ENCODE measurements at regions of chr19 and their contacts with region 1.

Region 1: DNA sequence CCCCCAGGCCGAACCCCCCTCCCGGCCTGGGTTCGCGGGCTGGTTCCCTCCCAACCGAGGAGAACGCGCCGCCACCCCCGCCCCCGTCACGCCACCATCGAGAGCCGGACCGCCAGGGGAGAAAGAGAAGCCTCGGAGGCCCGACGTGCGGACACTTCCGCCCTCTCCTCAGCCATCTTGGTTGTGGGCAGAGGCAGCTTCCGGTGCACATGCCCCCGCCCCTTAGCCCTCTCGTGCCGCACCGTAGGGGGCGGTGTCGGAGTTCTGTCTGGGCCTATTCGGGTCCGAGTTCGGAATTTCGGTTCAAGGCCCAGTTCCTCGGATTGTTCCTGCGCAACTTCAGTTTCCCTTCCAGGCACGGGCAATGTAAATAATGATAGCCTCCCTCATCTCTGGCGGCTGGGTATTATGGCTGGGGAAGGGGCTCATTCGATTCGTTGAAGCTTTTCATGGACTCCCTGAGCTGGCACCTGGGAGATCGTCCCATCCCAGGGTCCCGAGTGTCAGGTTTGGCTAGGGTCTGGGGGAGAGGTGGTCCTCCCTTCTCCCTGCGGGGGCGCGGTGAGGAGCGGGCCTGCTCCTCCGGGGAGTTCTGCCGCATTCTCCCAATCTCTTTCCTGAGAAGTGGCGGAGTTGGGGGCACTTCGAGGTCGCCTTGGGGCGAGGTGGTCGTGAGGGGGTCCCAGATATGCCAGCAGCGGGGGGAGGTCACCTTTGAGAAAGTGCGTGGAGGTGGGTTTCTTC is at the starts of genes IER2 and STX10:
- DNase-seq: peak; percentile 88
- ATAC-seq: peak; percentile 45
- H3K4me3 Mint-ChIP-seq: peak within 1 kb of the TSS; percentile 99
- H3K27ac Mint-ChIP-seq: peak within 1 kb of the TSS; percentile 99
- H3K4me1 Mint-ChIP-seq: peaks cover 40% of the 10 kb centered on the region
- H3K27me3 Mint-ChIP-seq: no peaks in the 10 kb centered on the region
- CTCF ChIP-seq: no peak
- total RNA-seq, gene IER2: 116 and 119 TPM in 2 replicates
- total RNA-seq, gene STX10: 41.7 and 43.6 TPM in 2 replicates

Region 2: DNA sequence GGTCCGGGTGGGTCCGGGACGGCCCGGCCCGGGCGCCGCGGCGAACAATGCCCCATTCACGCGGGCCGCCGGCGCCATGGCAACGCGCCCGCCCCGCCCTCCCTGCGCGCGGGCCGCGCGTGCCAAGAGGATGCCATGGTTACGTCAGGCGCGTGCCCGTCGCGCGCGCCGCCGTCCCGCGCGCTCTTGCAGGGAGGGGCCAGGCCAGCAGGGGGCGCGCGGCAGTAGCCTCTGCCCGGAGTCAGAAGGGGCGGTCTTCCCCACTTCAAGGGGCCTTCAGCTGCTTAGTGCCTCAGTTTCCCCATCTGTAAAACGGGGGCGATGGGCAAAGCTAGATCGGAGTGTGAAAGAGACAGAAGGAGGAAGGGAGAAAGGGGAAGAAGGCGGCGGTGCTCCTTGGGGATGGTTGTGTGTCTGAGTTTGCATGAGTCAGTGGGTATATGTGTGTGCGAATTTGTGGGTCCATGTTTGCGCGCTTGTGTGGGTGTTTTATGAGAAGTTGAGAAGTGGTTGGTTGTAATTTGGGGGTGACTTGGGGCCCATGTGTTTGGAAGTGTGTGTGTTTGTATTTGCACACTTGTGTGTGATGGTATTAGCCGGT is 166.7 kb before region 1 on chr19:
- CTCF ChIA-PET with region 1: interaction called, 3 read pairs
- POLR2A ChIA-PET with region 1: interaction called, 5 read pairs
- intact Hi-C with region 1: loop called (anchors 1 kb)
- DNase-seq: peak; percentile 94
- ATAC-seq: peak; percentile 78
- H3K4me3 Mint-ChIP-seq: no peak overlapping the region
- H3K27ac Mint-ChIP-seq: no peak overlapping the region
- H3K4me1 Mint-ChIP-seq: peaks cover 5% of the 10 kb centered on the region
- H3K27me3 Mint-ChIP-seq: peaks cover 3% of the 10 kb centered on the region
- CTCF ChIP-seq: peak; percentile 65

Region 3: DNA sequence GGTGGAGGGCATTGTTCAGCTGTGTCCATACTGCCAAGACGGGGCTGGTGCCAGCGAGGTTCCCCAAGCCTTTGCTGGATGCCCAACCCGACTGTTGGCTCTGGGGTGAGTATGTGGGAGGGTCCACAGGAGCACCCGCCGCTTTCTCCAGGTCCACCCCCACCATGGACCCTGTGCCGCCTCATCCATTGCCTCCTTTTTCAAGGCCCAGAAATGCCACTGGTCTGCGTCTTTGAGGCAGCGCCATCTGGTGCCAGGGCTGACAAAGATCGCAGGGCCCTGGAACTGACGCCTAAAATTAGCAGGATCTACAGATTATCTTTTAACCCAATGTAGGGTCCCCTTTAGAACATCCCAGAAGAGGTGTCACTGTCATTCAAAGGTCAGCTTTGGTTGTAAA is 120.5 kb before region 1 on chr19:
- CTCF ChIA-PET with region 1: no interaction called
- POLR2A ChIA-PET with region 1: no interaction called
- intact Hi-C with region 1: no loop called
- DNase-seq: no peak
- ATAC-seq: no peak
- H3K4me3 Mint-ChIP-seq: no peak overlapping the region
- H3K27ac Mint-ChIP-seq: no peak overlapping the region
- H3K4me1 Mint-ChIP-seq: peaks cover 3% of the 10 kb centered on the region
- H3K27me3 Mint-ChIP-seq: peaks cover 12% of the 10 kb centered on the region
- CTCF ChIP-seq: no peak

Region 4: DNA sequence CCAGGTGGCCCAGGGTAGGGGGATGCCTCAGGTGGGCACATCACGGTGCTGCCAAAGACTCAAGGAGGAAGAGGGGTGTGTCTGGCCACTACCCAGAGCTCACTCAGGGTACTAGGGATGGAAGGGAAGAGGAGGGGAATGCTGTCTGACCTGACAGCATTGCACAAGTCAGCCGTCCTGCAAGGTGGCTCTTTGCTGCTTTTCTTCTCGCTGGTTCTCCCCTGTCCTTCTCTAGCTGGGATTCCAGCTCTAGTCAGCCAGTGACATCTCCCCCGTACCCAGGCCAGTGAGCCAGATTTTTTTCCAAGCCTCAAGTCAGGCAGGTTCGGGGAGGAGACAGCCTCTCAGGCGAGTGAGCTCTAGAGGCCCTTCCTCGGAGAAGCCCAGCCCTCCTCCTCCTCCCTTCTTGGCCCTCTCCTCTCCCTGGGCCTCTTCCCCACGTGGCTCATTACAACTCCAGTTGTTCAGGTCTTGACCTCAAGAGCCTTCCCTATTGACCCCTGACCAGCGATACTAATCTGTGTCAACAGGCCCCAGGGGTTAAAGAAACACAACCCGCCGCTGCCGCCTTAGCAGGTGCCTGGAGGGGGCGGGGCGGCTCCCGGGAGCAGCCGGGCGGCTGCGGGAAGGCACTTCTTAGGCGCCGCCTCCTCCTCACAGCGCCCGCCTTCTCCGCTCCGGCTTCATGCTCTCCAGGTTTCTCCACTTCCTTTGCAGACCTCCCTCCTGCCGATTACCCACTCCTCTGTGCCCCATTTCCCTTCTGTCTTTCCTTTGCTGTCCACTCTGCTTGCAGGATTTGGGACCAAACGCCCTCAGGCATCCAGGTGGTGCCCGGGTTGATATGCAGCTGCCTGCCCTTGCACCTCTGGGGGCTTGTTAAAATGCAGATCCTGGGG is 98.8 kb before region 1 on chr19:
- CTCF ChIA-PET with region 1: no interaction called
- POLR2A ChIA-PET with region 1: no interaction called
- intact Hi-C with region 1: no loop called
- DNase-seq: no peak
- ATAC-seq: no peak
- H3K4me3 Mint-ChIP-seq: no peak overlapping the region
- H3K27ac Mint-ChIP-seq: no peak overlapping the region
- H3K4me1 Mint-ChIP-seq: peaks cover 5% of the 10 kb centered on the region
- H3K27me3 Mint-ChIP-seq: peaks cover 23% of the 10 kb centered on the region
- CTCF ChIP-seq: no peak

Region 5: DNA sequence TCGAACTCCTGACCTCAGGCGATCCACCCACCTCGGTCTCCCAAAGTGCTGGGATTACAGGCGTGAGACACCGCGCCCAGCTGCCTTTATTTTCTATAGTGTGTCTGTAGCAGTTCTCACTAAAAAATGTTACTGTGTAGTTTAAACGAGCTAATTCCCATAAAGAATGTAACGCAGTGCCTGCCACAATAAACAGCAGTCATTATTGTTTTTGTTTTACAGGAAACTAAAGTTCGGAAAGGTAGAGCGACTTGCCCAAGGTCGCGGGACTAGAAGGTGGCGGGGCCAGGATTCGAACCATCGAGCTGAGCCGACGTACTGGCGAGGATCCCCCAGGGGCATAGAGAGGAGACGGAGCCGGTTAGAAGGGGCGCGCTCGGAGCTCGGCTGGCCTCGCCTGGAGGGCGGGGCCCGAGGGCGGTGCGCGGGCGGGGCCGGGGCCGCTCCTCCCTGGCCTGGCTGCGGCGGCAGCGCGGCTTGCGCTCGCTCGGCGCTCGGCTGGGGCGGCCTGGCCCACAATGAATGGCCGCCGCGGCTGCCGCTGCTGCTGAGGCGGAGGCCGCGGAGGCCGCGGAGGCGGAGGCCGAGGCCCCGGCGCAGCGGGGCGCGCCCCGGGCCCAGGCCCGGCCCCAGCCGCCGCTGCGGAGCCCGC is 32.5 kb before region 1 on chr19 and contains the start of gene NACC1:
- CTCF ChIA-PET with region 1: interaction called, 8 read pairs
- POLR2A ChIA-PET with region 1: interaction called, 117 read pairs
- intact Hi-C with region 1: loop called (anchors 1 kb)
- DNase-seq: peak; percentile 94
- ATAC-seq: peak; percentile 81
- H3K4me3 Mint-ChIP-seq: peak within 1 kb of the TSS; percentile 99
- H3K27ac Mint-ChIP-seq: peak within 1 kb of the TSS; percentile 96
- H3K4me1 Mint-ChIP-seq: peaks cover 64% of the 10 kb centered on the region
- H3K27me3 Mint-ChIP-seq: no peaks in the 10 kb centered on the region
- CTCF ChIP-seq: no peak
- total RNA-seq, gene NACC1: 62.1 and 68.8 TPM in 2 replicates

Region 6: GRCh38 chr19:13195678-13196077 is 45.3 kb after region 1 on chr19:
- CTCF ChIA-PET with region 1: interaction called, 41 read pairs
- POLR2A ChIA-PET with region 1: interaction called, 104 read pairs
- intact Hi-C with region 1: loop called (anchors 1 kb)
- DNase-seq: peak; percentile 57
- ATAC-seq: peak; percentile 79
- H3K4me3 Mint-ChIP-seq: no peak overlapping the region
- H3K27ac Mint-ChIP-seq: peak overlapping the region; percentile 63
- H3K4me1 Mint-ChIP-seq: peaks cover 29% of the 10 kb centered on the region
- H3K27me3 Mint-ChIP-seq: no peaks in the 10 kb centered on the region
- CTCF ChIP-seq: no peak

Region 7: DNA sequence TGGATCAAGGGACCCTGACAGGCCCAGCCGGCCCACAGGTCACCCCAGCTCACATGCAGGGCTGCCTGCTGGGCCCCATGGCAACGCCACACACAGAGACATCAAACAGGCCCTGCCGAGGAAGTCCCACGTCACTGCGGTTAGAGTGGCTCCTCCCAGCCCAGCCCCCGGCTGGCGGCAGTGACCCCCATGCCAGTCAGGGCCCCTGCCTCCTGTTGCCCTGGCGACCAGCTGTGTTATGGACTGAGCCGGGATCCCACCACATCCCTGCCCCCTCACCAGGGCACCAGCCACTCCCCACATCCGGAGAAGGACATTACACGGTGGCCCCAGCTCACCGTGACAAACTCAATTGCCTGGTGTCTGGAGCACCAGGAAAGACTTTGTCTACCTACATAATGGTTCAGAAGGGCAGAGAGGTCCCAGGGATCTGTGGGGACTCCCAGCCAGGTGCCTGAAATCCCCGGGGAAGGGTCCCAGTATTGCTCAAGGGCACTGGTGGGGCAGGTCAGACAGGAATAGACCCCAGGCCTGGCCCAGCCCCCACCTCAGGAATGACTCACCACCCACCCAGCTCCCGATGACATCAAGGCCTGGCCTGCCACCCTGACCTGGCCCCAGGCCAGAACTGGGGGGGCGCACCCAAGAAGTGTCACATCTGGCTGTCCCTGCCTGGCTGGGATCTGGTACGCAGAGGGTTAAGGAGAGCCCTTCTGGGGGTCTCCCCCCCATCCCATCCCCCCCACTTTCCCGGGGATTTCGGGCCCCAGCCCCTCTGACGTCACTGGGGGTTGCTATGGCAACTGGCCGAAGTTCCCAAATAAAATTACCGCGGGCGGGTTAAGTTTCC is 696.4 kb after region 1 on chr19:
- CTCF ChIA-PET with region 1: no interaction called
- POLR2A ChIA-PET with region 1: interaction called, 4 read pairs
- intact Hi-C with region 1: loop called (anchors 1 kb)
- DNase-seq: peak; percentile 92
- ATAC-seq: peak; percentile 56
- H3K4me3 Mint-ChIP-seq: peak overlapping the region; percentile 88
- H3K27ac Mint-ChIP-seq: peak overlapping the region; percentile 98
- H3K4me1 Mint-ChIP-seq: peaks cover 62% of the 10 kb centered on the region
- H3K27me3 Mint-ChIP-seq: peaks cover 3% of the 10 kb centered on the region
- CTCF ChIP-seq: no peak